Activated naive CD4-positive, alpha-beta T cell treated with anti-CD3 and anti-CD28 coated beads for 36 hours (primary cell): ENCODE measurements at regions of chr15 and their contacts with region 1.

Region 1: DNA sequence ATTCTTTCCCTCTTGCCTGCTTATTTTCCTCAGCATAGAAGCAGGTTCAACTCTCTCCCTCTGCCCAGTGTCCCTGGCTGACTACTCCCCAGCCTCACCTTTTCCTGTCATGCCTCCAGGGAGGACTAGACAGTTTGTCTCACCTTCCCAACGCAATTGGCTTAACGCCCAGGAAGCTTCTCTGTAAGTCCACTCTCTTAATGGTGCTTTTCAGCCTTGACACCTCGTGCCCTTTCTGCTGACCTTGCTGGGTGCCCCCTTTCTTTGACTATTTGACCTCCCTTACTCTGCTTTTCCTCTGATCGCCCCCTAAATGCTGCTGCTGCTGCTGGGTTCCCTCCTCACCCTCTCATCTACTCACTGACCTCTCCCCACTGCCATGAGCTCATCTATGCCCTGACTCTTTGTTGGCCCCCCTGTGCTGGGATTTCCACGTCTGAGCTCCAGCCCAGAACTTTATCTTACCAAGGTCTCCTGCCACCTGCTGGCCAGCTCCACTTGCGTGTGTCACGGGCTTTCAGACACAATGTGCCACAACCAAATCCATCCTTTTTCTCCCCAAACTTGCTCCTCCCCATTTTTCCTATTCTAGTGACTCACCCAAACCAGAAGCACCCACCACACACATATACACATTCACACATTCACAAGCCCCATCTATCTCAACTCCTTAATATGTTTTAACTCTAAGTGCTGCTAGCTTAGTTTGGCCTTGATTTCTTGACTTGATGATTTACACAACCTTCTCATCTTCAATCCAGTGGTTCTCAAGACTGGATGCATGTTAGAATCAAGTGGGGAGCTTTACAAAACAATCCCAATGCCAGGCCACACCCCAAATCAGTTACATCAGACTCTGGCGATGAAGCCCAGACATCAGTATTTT is 16.6 kb downstream of the EPB42 start:
- DNase-seq: peak; percentile 75
- H3K4me3 Mint-ChIP-seq: no peak overlapping the region
- H3K27ac Mint-ChIP-seq: no peak overlapping the region
- H3K4me1 Mint-ChIP-seq: peaks cover 5% of the 10 kb centered on the region
- H3K27me3 Mint-ChIP-seq: peaks cover 5% of the 10 kb centered on the region

Region 2: DNA sequence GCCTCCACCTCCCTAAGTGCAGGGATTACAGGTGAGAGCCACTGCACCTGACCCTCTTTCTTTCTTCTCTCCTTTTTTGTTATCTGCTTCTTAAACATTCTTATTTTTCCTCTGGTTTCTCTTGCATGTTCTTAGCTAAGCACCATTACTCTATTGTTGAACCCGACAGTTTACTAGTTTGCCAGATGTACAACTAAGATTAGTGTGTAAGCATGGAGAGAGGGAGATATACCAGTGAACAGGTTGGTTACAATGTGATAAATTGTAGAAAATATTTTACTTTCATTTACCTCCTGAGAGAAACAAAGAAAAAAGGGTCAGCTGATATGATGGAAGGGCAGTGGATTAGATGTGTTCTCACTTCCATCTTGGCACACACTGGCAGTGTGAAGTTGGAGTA is 650.7 kb before region 1 on chr15:
- CTCF ChIA-PET with region 1: no interaction called
- intact Hi-C with region 1: no loop called
- DNase-seq: no peak
- H3K4me3 Mint-ChIP-seq: no peak overlapping the region
- H3K27ac Mint-ChIP-seq: no peak overlapping the region
- H3K4me1 Mint-ChIP-seq: peaks cover 31% of the 10 kb centered on the region
- H3K27me3 Mint-ChIP-seq: no peaks in the 10 kb centered on the region

Region 3: GRCh38 chr15:42704492-42704926 is 499.8 kb before region 1 on chr15:
- CTCF ChIA-PET with region 1: no interaction called
- intact Hi-C with region 1: loop called (anchors 1 kb)
- DNase-seq: peak; percentile 81
- H3K4me3 Mint-ChIP-seq: no peak overlapping the region
- H3K27ac Mint-ChIP-seq: no peak overlapping the region
- H3K4me1 Mint-ChIP-seq: peaks cover 6% of the 10 kb centered on the region
- H3K27me3 Mint-ChIP-seq: no peaks in the 10 kb centered on the region